Calu3 (cell line): ENCODE measurements at regions of chr6 and their contacts with region 1.

Region 1: DNA sequence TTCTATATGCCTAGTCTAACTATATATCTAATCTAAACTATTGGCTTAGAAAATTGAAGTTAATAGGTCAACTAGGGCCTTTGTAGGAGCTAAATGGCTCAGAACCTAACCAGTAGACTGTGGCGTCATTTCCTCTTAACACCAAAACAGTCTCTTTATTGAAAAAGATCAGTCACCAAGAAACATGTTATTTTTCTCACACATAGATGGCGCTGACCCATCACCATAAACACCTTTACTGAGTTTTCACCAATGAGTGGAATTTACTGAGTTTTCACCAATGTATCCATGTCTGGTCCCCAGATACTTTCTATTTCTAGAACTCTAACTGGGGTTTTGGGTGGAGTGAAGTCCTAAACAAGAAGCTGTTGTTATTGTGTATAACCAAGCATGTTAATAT is 636.0 kb downstream of the BCKDHB start:
- DNase-seq: peak; percentile 13
- H3K4me3 Mint-ChIP-seq: no peak overlapping the region
- H3K27ac Mint-ChIP-seq: no peak overlapping the region
- H3K4me1 Mint-ChIP-seq: no peaks in the 10 kb centered on the region
- H3K27me3 Mint-ChIP-seq: no peaks in the 10 kb centered on the region
- CTCF ChIP-seq: peak; percentile 38

Region 2: DNA sequence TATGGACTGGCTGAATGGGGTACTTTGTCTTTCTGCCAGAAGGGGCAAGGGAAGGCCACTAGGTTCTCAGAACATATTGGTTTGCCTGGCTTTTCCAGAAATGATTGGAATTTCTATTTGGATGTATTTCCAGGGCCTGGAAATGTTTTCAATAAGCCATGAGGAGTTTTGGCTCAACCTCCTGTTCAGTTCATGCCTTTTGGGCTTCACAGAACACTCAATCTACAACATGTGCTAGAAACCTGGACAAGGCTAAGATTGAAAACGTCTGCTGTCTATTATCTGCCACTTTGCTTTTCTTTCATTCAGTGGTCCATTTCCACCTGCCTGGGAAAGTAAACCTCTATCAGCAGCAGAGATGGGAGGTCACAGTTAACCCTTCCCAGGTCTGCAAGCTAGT is 216.6 kb after region 1 on chr6:
- CTCF ChIA-PET with region 1: no interaction called
- intact Hi-C with region 1: no loop called
- DNase-seq: no peak
- H3K4me3 Mint-ChIP-seq: no peak overlapping the region
- H3K27ac Mint-ChIP-seq: no peak overlapping the region
- H3K4me1 Mint-ChIP-seq: no peaks in the 10 kb centered on the region
- H3K27me3 Mint-ChIP-seq: no peaks in the 10 kb centered on the region
- CTCF ChIP-seq: no peak

Region 3: GRCh38 chr6:81465859-81466258 is 723.4 kb after region 1 on chr6:
- CTCF ChIA-PET with region 1: no interaction called
- intact Hi-C with region 1: loop called (anchors 5 kb)
- DNase-seq: peak; percentile 26
- H3K4me3 Mint-ChIP-seq: no peak overlapping the region
- H3K27ac Mint-ChIP-seq: no peak overlapping the region
- H3K4me1 Mint-ChIP-seq: no peaks in the 10 kb centered on the region
- H3K27me3 Mint-ChIP-seq: no peaks in the 10 kb centered on the region
- CTCF ChIP-seq: peak; percentile 61